PC-9 (cell line): ENCODE measurements at regions of chr1 and their contacts with region 1.

Region 1: GRCh38 chr1:26351591-26352337 is 2.2 kb downstream of the CRYBG2 start:
- DNase-seq: peak; percentile 82 to 93
- H3K4me3 ChIP-seq: peak overlapping the region; percentile 56; the same call in 1 of the 2 replicates
- H3K27ac ChIP-seq: peak overlapping the region; percentile 99
- H3K4me1 ChIP-seq: peaks cover 77% of the 10 kb centered on the region
- H3K27me3 ChIP-seq: no peaks in the 10 kb centered on the region
- CTCF ChIP-seq: no peak

Region 2: GRCh38 chr1:25484096-25484495 is 867.7 kb before region 1 on chr1:
- CTCF ChIA-PET with region 1: no interaction called
- POLR2A ChIA-PET with region 1: no interaction called
- intact Hi-C with region 1: no loop called
- DNase-seq: no peak
- H3K4me3 ChIP-seq: no peak overlapping the region
- H3K27ac ChIP-seq: no peak overlapping the region
- H3K4me1 ChIP-seq: peaks cover 3% of the 10 kb centered on the region
- H3K27me3 ChIP-seq: no peaks in the 10 kb centered on the region
- CTCF ChIP-seq: no peak

Region 3: GRCh38 chr1:26372039-26372438 is 20.3 kb after region 1 on chr1:
- CTCF ChIA-PET with region 1: no interaction called
- POLR2A ChIA-PET with region 1: interaction called, 10 read pairs
- intact Hi-C with region 1: no loop called
- DNase-seq: no peak
- H3K4me3 ChIP-seq: no peak overlapping the region
- H3K27ac ChIP-seq: no peak overlapping the region
- H3K4me1 ChIP-seq: no peaks in the 10 kb centered on the region
- H3K27me3 ChIP-seq: no peaks in the 10 kb centered on the region
- CTCF ChIP-seq: no peak

Region 4: GRCh38 chr1:26787706-26788514 is 436.1 kb after region 1 on chr1 and contains the start of gene PIGV:
- CTCF ChIA-PET with region 1: no interaction called
- POLR2A ChIA-PET with region 1: no interaction called
- intact Hi-C with region 1: no loop called
- DNase-seq: peak in 1 of 2 experiments; percentile 84
- H3K4me3 ChIP-seq: peak within 1 kb of the TSS; percentile 93
- H3K27ac ChIP-seq: peak within 1 kb of the TSS; percentile 92
- H3K4me1 ChIP-seq: peaks cover 52% of the 10 kb centered on the region
- H3K27me3 ChIP-seq: no peaks in the 10 kb centered on the region
- CTCF ChIP-seq: no peak
- total RNA-seq, gene PIGV: 30.8 and 31.9 TPM in 2 replicates